PC-9 (cell line): ENCODE measurements at regions of chr7 and their contacts with region 1.

Region 1: GRCh38 chr7:142496545-142497041 is 238.7 kb upstream of the PRSS58 start:
- DNase-seq: peak; percentile 84 to 98
- H3K4me3 ChIP-seq: peak overlapping the region; percentile 22; the same call in 1 of the 2 replicates
- H3K27ac ChIP-seq: peak overlapping the region; percentile 74
- H3K4me1 ChIP-seq: peaks cover 51% of the 10 kb centered on the region
- H3K27me3 ChIP-seq: no peaks in the 10 kb centered on the region
- CTCF ChIP-seq: peak; percentile 95

Region 2: DNA sequence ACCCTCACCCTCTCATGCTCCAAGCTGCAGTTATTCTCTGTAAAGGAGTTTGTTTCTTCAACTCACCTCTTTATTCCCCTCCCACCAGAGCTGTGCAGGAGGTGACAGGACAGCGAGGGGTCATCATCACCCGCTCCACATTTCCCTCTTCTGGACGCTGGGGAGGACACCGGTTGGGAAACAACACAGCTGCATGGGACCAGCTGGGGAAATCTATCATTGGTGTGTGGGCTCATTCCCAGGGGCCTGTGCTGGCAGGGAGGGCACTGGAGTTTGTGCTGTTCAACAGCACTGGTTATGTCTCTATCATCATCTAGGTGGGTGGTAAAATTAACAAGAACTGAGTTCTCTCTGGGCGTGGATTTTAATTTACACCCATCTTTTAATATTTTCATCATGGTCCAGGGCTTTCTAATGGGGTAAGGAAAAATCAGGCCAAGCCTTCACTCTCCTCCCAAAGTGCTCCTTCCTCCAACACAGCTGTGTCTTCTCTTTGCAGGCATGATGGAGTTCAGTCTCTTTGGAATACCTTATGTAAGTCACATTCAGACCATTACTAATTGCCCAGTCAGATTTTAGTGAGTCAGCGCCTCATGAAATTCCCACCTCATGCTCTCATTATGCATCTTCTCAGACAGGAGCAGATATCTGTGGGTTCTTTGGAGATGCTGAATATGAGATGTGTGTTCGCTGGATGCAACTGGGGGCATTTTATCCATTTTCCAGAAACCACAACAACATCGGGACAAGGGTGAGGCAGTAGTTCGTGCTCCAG is 300.3 kb before region 1 on chr7:
- CTCF ChIA-PET with region 1: no interaction called
- POLR2A ChIA-PET with region 1: no interaction called
- intact Hi-C with region 1: no loop called
- DNase-seq: no peak
- H3K4me3 ChIP-seq: no peak overlapping the region
- H3K27ac ChIP-seq: no peak overlapping the region
- H3K4me1 ChIP-seq: 0 out of 2 replicates have a peak, but pooled peaks cover 8% of the 10 kb centered on the region
- H3K27me3 ChIP-seq: no peaks in the 10 kb centered on the region
- CTCF ChIP-seq: no peak

Region 3: DNA sequence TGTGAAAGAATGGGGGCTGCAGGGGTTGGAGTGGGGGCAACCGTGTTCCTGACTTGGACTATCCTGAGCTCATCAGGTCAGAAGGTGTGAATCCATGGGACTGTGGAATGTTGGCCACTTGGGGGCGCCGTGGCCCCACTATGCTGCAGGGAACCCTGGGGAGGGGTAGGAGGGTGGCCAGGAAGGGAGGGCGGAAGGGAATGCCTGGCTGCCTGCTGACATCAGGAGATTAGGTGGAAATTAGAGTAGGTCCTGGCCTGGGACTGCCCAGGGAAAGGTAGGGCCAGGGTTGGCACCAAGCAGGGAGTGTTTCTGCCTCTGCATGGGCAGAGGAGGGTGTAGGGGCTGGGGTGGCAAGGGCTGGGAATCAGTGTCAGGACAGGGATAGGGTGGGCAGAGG is 172.9 kb before region 1 on chr7:
- CTCF ChIA-PET with region 1: interaction called, 4 read pairs
- POLR2A ChIA-PET with region 1: no interaction called
- intact Hi-C with region 1: loop called (anchors 5 kb)
- DNase-seq: peak; percentile 66 to 85
- H3K4me3 ChIP-seq: no peak overlapping the region
- H3K27ac ChIP-seq: no peak overlapping the region
- H3K4me1 ChIP-seq: peaks cover 13% of the 10 kb centered on the region
- H3K27me3 ChIP-seq: no peaks in the 10 kb centered on the region
- CTCF ChIP-seq: peak; percentile 88

Region 4: GRCh38 chr7:142420559-142421362 is 75.8 kb before region 1 on chr7:
- CTCF ChIA-PET with region 1: interaction called, 3 read pairs
- POLR2A ChIA-PET with region 1: no interaction called
- intact Hi-C with region 1: loop called (anchors 1 kb)
- DNase-seq: peak; percentile 74 to 79
- H3K4me3 ChIP-seq: no peak overlapping the region
- H3K27ac ChIP-seq: 0 out of 2 replicates have a peak overlapping the region, but pooled peaks have one; percentile 22
- H3K4me1 ChIP-seq: peaks cover 9% of the 10 kb centered on the region
- H3K27me3 ChIP-seq: no peaks in the 10 kb centered on the region
- CTCF ChIP-seq: peak; percentile 59; the same call in 1 of the 2 replicates

Region 5: DNA sequence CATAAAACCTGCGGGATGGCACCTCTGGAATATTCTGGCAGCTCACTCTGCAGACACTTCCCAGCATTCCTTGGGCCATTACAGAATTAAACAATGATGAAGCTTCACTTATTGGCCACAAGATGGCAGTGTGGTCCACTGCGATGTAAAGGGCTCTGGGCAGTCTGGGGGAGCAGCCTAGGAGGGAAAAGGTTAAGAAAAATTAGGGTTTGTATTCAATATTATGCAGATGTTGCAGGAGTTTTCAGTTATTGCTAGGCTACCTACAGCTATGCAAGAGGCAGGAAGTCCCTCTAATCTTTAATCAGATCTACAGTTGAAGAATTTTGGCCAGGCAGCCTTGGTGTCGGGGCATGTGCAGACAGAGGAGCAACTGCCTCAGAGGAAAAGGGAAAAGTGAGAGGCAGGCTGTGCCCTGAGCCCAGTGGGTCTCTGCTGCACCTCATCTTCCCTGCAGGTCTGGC is 19.5 kb after region 1 on chr7:
- CTCF ChIA-PET with region 1: interaction called, 14 read pairs
- POLR2A ChIA-PET with region 1: no interaction called
- intact Hi-C with region 1: loop called (anchors 1 kb)
- DNase-seq: peak; percentile 72 to 87
- H3K4me3 ChIP-seq: no peak overlapping the region
- H3K27ac ChIP-seq: peak overlapping the region; percentile 79
- H3K4me1 ChIP-seq: peaks cover 48% of the 10 kb centered on the region
- H3K27me3 ChIP-seq: no peaks in the 10 kb centered on the region
- CTCF ChIP-seq: peak; percentile 97

Region 6: GRCh38 chr7:142603870-142604448 is 107.4 kb after region 1 on chr7:
- CTCF ChIA-PET with region 1: no interaction called
- POLR2A ChIA-PET with region 1: no interaction called
- intact Hi-C with region 1: loop called (anchors 2 kb)
- DNase-seq: peak; percentile 51 to 65
- H3K4me3 ChIP-seq: peak overlapping the region; percentile 25; the same call in 1 of the 2 replicates
- H3K27ac ChIP-seq: no peak overlapping the region
- H3K4me1 ChIP-seq: peaks cover 18% of the 10 kb centered on the region
- H3K27me3 ChIP-seq: no peaks in the 10 kb centered on the region
- CTCF ChIP-seq: peak; percentile 97

Region 7: DNA sequence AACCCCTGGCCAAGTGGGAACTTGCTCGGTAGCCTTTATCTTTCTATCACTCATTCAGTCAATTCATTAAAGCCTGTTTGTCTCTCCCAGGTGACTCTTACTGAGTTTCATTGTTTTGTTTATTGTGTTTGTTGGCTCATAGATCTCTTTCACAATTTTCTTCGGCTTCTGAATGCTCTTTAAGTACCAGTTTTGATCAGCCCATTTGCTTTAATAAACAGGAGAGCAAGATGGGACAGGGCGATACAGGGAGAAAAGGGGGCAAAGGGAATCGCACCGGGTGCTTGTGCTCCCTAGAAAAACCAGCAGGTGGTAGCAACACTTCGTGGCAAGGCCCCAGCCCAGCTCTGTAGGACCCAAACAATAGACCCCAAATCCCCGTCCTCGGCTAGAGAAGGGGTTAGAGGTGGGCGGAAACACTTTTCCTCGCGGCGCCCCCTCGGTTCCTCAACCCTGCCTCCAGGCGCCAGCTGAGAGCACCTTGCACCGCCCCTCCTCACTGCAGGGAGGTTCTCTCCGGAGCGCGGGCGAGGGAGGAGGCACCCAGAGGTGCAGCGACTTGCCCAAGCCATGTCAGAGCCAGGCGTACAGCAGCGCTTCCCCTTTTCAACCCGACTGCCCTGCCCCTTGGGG is 357.3 kb after region 1 on chr7:
- CTCF ChIA-PET with region 1: no interaction called
- POLR2A ChIA-PET with region 1: no interaction called
- intact Hi-C with region 1: loop called (anchors 2 kb)
- DNase-seq: peak; percentile 78 to 85
- H3K4me3 ChIP-seq: peak overlapping the region; percentile 95
- H3K27ac ChIP-seq: peak overlapping the region; percentile 83
- H3K4me1 ChIP-seq: peaks cover 40% of the 10 kb centered on the region
- H3K27me3 ChIP-seq: no peaks in the 10 kb centered on the region
- CTCF ChIP-seq: peak; percentile 92